ENCODE measurements at regions of chr5 and their contacts with region 1.

Region 1: GRCh38 chr5:6377905-6378765 is at the start of gene MED10:
- DNase-seq: peak; percentile 92
- H3K4me3 Mint-ChIP-seq: peak within 1 kb of the TSS; percentile 95
- H3K27ac Mint-ChIP-seq: peak within 1 kb of the TSS; percentile 97
- H3K4me1 Mint-ChIP-seq: peaks cover 57% of the 10 kb centered on the region
- H3K27me3 Mint-ChIP-seq: peaks cover 3% of the 10 kb centered on the region
- total RNA-seq, gene MED10: 60.2 and 67.1 TPM in 2 replicates

Region 2: GRCh38 chr5:5492087-5492933 is 885.8 kb before region 1 on chr5:
- intact Hi-C with region 1: loop called (anchors 2 kb)
- DNase-seq: peak; percentile 37
- H3K4me3 Mint-ChIP-seq: peak overlapping the region; percentile 72
- H3K27ac Mint-ChIP-seq: no peak overlapping the region
- H3K4me1 Mint-ChIP-seq: peaks cover 16% of the 10 kb centered on the region
- H3K27me3 Mint-ChIP-seq: peaks cover 15% of the 10 kb centered on the region

Region 3: GRCh38 chr5:6273090-6273735 is 104.9 kb before region 1 on chr5:
- intact Hi-C with region 1: loop called (anchors 5 kb)
- DNase-seq: no peak
- H3K4me3 Mint-ChIP-seq: peak overlapping the region; percentile 34
- H3K27ac Mint-ChIP-seq: peak overlapping the region; percentile 91
- H3K4me1 Mint-ChIP-seq: peaks cover 23% of the 10 kb centered on the region
- H3K27me3 Mint-ChIP-seq: peaks cover 2% of the 10 kb centered on the region

Region 4: DNA sequence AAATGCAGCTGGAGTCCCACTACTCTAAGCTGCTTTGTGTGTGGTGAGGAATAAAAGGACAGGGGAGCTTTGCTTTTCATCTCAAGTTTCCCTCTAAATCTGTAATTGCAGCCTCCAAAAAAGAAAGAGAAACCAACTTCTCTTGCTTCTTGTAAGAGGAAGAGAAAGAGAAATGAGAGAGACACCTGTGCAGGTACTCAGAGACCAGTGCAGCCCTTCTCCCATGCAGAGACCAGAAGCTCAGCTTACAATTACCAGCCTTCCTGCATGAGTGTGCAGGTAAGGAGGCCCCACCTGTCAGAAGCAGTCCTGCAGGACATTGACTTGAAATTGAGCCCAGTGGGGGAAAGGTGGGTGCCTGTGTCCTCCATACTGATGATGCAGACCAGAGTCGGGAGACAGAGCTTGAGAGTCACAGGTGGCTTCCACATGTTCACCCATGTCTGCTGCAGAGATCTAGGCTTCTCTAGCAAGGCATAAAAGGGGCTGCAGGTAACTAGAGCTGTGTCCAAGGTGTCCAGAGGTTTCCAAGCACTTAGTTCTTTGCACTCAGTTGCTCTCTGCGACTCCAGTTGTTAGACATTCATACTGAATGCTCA is 15.6 kb after region 1 on chr5:
- intact Hi-C with region 1: no loop called
- DNase-seq: no peak
- H3K4me3 Mint-ChIP-seq: peak overlapping the region; percentile 12
- H3K27ac Mint-ChIP-seq: no peak overlapping the region
- H3K4me1 Mint-ChIP-seq: peaks cover 11% of the 10 kb centered on the region
- H3K27me3 Mint-ChIP-seq: peaks cover 3% of the 10 kb centered on the region

Region 5: DNA sequence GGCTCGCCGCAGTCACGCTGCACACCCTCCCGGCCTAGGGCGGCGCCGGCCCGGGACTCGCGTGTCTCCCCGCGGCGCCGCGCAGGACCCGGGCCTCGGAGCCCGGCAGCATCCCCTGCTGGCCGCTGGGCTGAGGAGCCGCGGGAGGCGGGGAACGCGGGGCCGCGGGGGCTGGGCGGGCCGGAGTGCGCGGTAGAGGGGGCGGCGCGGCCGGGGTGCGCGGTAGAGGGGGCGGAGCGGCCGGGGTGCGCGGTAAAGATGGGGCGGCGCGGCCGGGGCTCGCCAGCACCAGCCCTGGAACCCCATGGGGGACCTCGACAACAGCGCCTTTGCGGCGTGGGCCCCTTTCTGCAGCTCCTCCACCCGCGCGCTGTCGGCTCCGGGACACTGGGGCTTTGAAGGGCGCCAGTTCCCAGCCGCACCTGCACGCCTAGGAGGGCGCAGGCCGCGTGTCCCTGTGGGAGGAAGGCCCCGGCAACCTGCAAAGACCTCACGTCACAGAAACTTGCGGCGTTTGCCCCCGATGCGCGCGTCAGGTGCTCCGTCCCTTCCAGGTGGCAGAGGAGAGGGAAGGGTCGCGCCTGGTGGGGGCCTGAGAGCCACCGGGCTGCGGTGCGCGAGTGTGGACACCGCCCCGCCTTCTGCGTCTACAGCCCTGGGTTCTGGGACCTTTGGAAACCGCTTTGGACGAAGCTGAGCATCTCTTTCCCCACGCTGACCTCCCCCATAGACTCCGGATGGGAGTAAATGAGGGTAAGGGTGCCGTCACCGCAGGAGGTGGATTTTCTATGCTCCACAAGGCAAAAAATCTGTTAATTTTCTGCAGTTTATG is 205.1 kb after region 1 on chr5:
- intact Hi-C with region 1: loop called (anchors 5 kb)
- DNase-seq: peak; percentile 20
- H3K4me3 Mint-ChIP-seq: no peak overlapping the region
- H3K27ac Mint-ChIP-seq: no peak overlapping the region
- H3K4me1 Mint-ChIP-seq: no peaks in the 10 kb centered on the region
- H3K27me3 Mint-ChIP-seq: peaks cover 45% of the 10 kb centered on the region

Region 6: DNA sequence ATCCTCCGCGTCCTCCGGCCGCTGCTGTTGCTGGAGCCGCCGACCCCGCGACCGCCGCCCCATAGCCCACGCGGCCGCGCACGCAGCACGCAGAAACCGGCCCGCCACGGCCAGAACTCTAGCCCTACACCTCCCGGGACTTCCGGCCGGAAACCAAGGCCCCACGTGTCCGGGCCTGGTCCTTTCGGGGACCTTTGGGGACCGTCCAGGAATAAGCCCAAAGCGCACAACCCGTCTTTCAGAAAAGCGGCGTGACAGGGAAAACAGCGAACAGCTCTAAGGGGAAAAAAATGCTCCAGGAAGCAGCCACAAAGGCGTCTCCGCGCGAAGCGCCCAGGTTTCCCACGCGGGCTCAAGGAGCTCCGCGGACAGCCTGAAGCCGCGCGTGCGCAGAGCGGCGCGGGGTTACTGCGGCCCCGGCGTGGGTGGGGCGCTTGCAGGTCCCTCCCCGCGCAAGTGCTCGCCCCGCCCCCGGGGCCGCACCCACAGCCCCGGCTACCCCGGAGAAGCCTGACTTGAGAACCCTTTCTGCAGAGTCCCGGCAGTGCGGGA is 254.9 kb after region 1 on chr5 and contains the starts of genes NSUN2 and SRD5A1:
- intact Hi-C with region 1: loop called (anchors 1 kb)
- DNase-seq: peak; percentile 90
- H3K4me3 Mint-ChIP-seq: peak within 1 kb of the TSS; percentile 98
- H3K27ac Mint-ChIP-seq: peak within 1 kb of the TSS; percentile 97
- H3K4me1 Mint-ChIP-seq: peaks cover 57% of the 10 kb centered on the region
- H3K27me3 Mint-ChIP-seq: no peaks in the 10 kb centered on the region
- total RNA-seq, gene NSUN2: 146 and 149 TPM in 2 replicates
- total RNA-seq, gene SRD5A1: 13.8 and 14.0 TPM in 2 replicates

Region 7: DNA sequence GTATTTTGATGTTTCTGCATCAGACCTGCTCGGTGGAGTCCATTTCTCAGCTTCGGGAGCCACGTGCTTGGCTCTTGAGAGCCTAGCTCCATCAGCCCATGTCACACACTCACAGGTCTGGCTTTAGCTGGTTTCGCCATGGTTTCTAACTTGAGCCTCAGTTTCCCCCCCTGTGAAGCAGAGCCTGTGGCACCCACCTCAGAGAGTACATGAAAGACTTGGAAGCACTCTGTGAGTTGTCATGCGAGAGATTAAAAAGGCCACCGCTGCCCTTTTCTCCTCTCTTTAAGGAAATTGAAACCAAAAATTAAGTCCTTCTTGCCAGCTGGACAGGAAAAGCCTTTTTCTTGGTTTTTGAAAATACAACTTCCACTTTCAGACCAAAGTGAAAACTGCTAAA is 343.9 kb after region 1 on chr5:
- intact Hi-C with region 1: no loop called
- DNase-seq: no peak
- H3K4me3 Mint-ChIP-seq: no peak overlapping the region
- H3K27ac Mint-ChIP-seq: peak overlapping the region; percentile 40
- H3K4me1 Mint-ChIP-seq: peaks cover 88% of the 10 kb centered on the region
- H3K27me3 Mint-ChIP-seq: no peaks in the 10 kb centered on the region

Region 8: DNA sequence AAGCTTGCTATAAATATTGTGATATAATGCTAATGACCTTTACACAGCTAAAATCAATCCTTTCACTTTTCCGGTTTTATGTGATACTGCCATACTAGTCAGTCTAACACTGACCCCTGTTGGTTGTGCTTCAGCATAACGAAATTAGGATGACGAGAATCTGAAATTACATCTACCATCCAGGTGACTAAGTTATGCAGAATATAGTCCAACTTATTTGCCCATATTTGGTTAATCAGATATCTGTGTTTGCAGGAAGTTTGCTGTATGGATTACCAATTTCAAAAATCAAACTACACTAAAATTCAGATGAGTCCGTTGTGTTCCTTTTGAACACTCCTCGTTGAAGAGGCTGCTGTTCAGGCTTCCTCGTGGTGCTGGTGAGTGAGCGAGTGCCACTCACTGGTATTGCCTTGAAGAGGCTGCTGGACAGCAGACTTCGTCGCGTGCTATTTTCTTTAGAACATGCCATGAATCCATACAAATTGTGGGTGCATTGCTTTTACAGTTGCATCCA is 367.6 kb after region 1 on chr5:
- intact Hi-C with region 1: loop called (anchors 1 kb)
- DNase-seq: no peak
- H3K4me3 Mint-ChIP-seq: no peak overlapping the region
- H3K27ac Mint-ChIP-seq: no peak overlapping the region
- H3K4me1 Mint-ChIP-seq: no peaks in the 10 kb centered on the region
- H3K27me3 Mint-ChIP-seq: no peaks in the 10 kb centered on the region